ENCODE measurements at regions of chr5 and their contacts with region 1.

Region 1: DNA sequence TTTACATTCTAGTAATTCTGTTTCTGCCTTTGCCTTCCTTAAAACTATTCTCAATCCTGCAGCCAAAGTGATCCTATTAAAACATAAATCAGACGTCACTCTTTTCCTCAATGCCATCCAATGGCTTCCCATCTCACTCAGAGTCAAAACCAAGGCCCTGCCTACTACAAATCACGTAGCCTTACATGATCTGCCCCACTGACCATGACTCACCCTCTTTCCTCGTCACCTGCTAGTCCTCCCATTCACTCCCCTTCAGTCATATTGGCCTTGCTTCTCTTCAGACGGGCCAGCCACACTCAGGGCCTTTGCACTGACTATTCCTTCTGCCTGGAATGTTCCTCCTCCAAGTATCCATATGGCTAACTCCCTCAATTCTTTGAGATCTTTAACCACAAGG is 39.0 kb upstream of the DMXL1 start:
- DNase-seq: no peak

Region 2: DNA sequence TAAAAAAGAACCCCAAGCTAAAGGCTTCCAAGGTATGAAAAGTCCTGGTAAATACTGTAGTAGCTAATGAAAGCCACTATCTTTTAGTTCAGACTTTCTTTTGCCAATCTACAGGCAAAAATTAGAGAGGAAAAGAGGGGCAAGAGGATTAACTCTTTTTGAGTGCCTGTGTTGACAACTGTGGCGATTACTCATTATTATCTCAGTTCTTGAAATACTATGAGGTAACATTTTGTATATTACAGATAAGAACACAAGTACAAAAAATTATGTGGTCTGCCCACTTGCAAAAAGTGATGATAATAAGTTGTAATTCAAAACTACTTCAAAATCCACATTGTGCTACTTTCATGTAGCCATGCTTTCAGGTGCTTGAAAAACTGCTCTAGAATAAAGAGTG is 187.6 kb before region 1 on chr5:
- intact Hi-C with region 1: no loop called
- DNase-seq: no peak

Region 3: GRCh38 chr5:119009131-119009530 is 22.8 kb before region 1 on chr5:
- intact Hi-C with region 1: loop called (anchors 2 kb)
- DNase-seq: no peak